AG04449 (cell line): ENCODE measurements at regions of chr1 and their contacts with region 1.

Region 1: GRCh38 chr1:26500488-26501175 is 28.4 kb downstream of the HMGN2 start:
- DNase-seq: no peak
- H3K4me3 ChIP-seq: peak overlapping the region; percentile 76
- CTCF ChIP-seq: no peak

Region 2: GRCh38 chr1:26450908-26451307 is 49.7 kb before region 1 on chr1:
- CTCF ChIA-PET with region 1: no interaction called
- POLR2A ChIA-PET with region 1: no interaction called
- DNase-seq: no peak
- H3K4me3 ChIP-seq: no peak overlapping the region
- CTCF ChIP-seq: no peak

Region 3: GRCh38 chr1:26482921-26483680 is 17.5 kb before region 1 on chr1:
- CTCF ChIA-PET with region 1: interaction called, 50 read pairs
- POLR2A ChIA-PET with region 1: interaction called, 4 read pairs
- DNase-seq: no peak
- H3K4me3 ChIP-seq: no peak overlapping the region
- CTCF ChIP-seq: no peak

Region 4: DNA sequence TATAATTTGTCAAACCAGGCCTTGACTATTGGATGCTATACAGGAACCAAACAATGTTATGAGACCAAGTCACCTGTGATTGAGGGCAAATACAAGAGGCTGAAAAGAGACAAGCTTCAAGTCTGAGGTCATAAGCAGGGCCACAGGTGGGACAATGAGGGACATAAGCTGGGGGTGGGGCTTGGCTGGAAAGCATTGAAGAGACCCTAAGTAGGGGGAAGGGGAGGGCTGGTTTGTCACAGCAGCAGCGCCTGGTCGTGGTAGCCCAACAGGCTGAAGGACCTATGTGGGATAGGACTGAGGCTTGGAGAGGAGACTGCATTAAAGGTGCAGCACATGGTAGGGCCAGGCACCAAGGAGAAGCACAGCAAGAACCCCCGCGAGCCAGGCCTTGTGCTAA is 10.5 kb before region 1 on chr1:
- CTCF ChIA-PET with region 1: interaction called, 50 read pairs
- POLR2A ChIA-PET with region 1: interaction called, 4 read pairs
- DNase-seq: no peak
- H3K4me3 ChIP-seq: no peak overlapping the region
- CTCF ChIP-seq: no peak

Region 5: GRCh38 chr1:26516987-26517765 is 16.5 kb after region 1 on chr1:
- CTCF ChIA-PET with region 1: interaction called, 11 read pairs
- POLR2A ChIA-PET with region 1: no interaction called
- DNase-seq: no peak
- H3K4me3 ChIP-seq: no peak overlapping the region
- CTCF ChIP-seq: no peak

Region 6: GRCh38 chr1:26529655-26530409 is 29.2 kb after region 1 on chr1 and contains the start of gene RPS6KA1:
- CTCF ChIA-PET with region 1: interaction called, 22 read pairs
- POLR2A ChIA-PET with region 1: no interaction called
- DNase-seq: no peak
- H3K4me3 ChIP-seq: peak within 1 kb of the TSS; percentile 61
- CTCF ChIP-seq: no peak

Region 7: DNA sequence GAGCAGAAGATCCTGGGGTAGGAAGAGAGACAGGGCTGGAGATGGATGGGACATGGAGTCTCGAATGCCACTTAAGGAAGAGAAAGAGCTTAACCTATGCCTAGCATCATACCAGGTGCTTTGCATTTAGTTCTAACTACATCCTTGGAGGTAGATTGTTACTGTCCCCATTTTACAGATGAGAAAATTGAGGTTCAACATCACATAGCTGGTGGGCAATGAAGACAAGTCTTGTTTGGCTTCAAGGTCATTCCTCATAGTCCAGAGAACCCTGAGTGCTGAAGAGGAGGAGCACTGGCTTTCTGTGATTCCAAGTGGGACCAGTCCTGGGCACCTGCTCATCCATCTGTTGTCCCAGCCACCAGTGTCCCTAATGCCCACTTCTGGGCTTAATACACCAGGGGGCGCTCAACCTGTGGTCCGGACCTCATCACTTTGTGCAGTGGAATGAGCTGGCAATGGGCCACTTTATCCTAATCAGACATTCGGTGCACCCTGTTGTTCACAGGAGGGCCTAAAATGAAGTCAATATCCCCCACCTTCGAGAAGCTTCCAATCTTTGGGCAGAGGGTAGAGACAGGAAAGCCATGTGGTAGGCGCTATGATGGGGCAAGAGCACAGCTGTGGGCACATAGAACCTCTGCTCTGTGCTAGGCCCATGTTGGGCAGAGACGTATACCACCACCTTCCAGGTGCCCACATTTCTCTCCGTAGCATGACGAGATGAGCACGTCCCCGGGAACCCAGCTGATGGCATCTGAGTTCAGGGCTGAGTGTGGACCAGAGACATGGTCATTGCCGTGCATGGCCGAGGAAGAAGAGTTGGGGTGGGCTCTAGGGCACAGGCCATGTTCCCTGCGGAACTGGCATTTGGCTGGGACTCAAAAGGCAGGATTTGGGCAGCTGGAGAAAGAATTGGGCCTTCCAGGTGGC is 38.1 kb after region 1 on chr1:
- CTCF ChIA-PET with region 1: interaction called, 22 read pairs
- POLR2A ChIA-PET with region 1: interaction called, 3 read pairs
- DNase-seq: no peak
- H3K4me3 ChIP-seq: no peak overlapping the region
- CTCF ChIP-seq: peak; percentile 38